ENCODE measurements at regions of chr16 and their contacts with region 1.

Region 1: GRCh38 chr16:70395345-70395901 is 43.5 kb downstream of the ST3GAL2 start:
- DNase-seq: peak; percentile 74 to 86 (median 83)
- ATAC-seq: peak; percentile 93
- H3K4me3 ChIP-seq: no peak overlapping the region
- H3K27ac ChIP-seq: peak overlapping the region; percentile 47; the same call in 1 of the 3 replicates
- H3K4me1 ChIP-seq: peaks cover 21 to 42% of the 10 kb centered on the region in 2 experiments
- H3K27me3 ChIP-seq: no peaks in the 10 kb centered on the region
- CTCF ChIP-seq: peak; percentile 84 to 91 (median 85)
- EP300 ChIP-seq: no peak
- POLR2A ChIP-seq: 0 out of 2 replicates have a peak, but pooled peaks have one; percentile 34
- RAD21 ChIP-seq: peak; percentile 72 to 91

Region 2: GRCh38 chr16:70359552-70359951 is 35.9 kb before region 1 on chr16:
- CTCF ChIA-PET with region 1: no interaction called
- POLR2A ChIA-PET with region 1: no interaction called
- in situ Hi-C with region 1: no loop called
- intact Hi-C with region 1: no loop called
- DNase-seq: no peak
- ATAC-seq: no peak
- H3K4me3 ChIP-seq: no peak overlapping the region
- H3K27ac ChIP-seq: no peak overlapping the region
- H3K4me1 ChIP-seq: no peaks in the 10 kb centered on the region
- H3K27me3 ChIP-seq: no peaks in the 10 kb centered on the region
- CTCF ChIP-seq: no peak
- EP300 ChIP-seq: no peak
- POLR2A ChIP-seq: no peak
- RAD21 ChIP-seq: no peak

Region 3: GRCh38 chr16:70428178-70428998 is 33.0 kb after region 1 on chr16:
- CTCF ChIA-PET with region 1: no interaction called
- POLR2A ChIA-PET with region 1: interaction called, 7 read pairs
- in situ Hi-C with region 1: no loop called
- intact Hi-C with region 1: loop called (anchors 1 kb)
- DNase-seq: peak; percentile 90 to 99 (median 93)
- ATAC-seq: peak; percentile 83
- H3K4me3 ChIP-seq: no peak overlapping the region; the same call in 1 of the 2 replicates
- H3K27ac ChIP-seq: peak overlapping the region; percentile 98
- H3K4me1 ChIP-seq: peaks cover 75 to 78% of the 10 kb centered on the region in 2 experiments
- H3K27me3 ChIP-seq: no peaks in the 10 kb centered on the region
- CTCF ChIP-seq: no peak
- EP300 ChIP-seq: peak; percentile 100
- POLR2A ChIP-seq: peak; percentile 85
- RAD21 ChIP-seq: peak; percentile 41 to 50; a peak in 3 of 4 replicates

Region 4: GRCh38 chr16:70454222-70455034 is 59.0 kb after region 1 on chr16 and contains the start of gene FCSK:
- CTCF ChIA-PET with region 1: interaction called, 10 read pairs
- POLR2A ChIA-PET with region 1: interaction called, 3 read pairs
- in situ Hi-C with region 1: no loop called
- intact Hi-C with region 1: loop called (anchors 2 kb)
- DNase-seq: peak; percentile 80 to 84 (median 83)
- ATAC-seq: peak; percentile 93
- H3K4me3 ChIP-seq: peak within 1 kb of the TSS; percentile 95
- H3K27ac ChIP-seq: peak within 1 kb of the TSS; percentile 97
- H3K4me1 ChIP-seq: peaks cover 10 to 23% of the 10 kb centered on the region in 2 experiments; a peak in 4 of 5 replicates
- H3K27me3 ChIP-seq: no peaks in the 10 kb centered on the region
- CTCF ChIP-seq: peak in 1 of 3 experiments; percentile 29; a peak in 1 of 6 replicates
- EP300 ChIP-seq: no peak; the same call in 1 of the 2 replicates
- POLR2A ChIP-seq: peak; percentile 28; the same call in 1 of the 2 replicates
- RAD21 ChIP-seq: peak in 1 of 2 experiments; percentile 19; a peak in 1 of 4 replicates
- polyA plus RNA-seq, gene FCSK: 0.92 to 1.1 TPM

Region 5: GRCh38 chr16:70460737-70461261 is 65.4 kb after region 1 on chr16:
- CTCF ChIA-PET with region 1: interaction called, 10 read pairs
- POLR2A ChIA-PET with region 1: interaction called, 3 read pairs
- in situ Hi-C with region 1: loop called (anchors 10 kb)
- intact Hi-C with region 1: loop called (anchors 2 kb)
- DNase-seq: no peak
- ATAC-seq: no peak; the same call in 2 of the 3 replicates
- H3K4me3 ChIP-seq: no peak overlapping the region
- H3K27ac ChIP-seq: no peak overlapping the region
- H3K4me1 ChIP-seq: peaks cover 5 to 16% of the 10 kb centered on the region in 2 experiments; a peak in 4 of 5 replicates
- H3K27me3 ChIP-seq: no peaks in the 10 kb centered on the region
- CTCF ChIP-seq: no peak
- EP300 ChIP-seq: no peak
- POLR2A ChIP-seq: no peak
- RAD21 ChIP-seq: no peak

Region 6: DNA sequence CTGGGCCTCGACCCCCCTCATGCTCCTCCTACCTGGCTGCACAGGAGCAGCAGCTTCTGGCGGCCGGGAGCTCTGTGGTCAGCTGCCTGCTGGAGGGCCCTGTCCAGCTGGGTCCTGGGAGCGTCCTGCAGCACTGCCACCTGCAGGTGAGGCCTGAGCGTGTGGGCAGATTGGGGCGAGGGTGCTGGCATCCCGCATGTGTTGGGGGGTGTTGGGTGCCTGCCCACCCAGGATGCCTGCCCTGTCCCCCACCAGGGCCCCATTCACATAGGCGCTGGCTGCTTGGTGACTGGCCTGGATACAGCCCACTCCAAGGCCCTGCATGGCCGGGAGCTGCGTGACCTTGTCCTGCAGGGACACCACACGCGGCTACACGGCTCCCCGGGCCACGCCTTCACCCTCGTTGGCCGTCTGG is 75.5 kb after region 1 on chr16:
- CTCF ChIA-PET with region 1: interaction called, 15 read pairs
- POLR2A ChIA-PET with region 1: interaction called, 3 read pairs
- in situ Hi-C with region 1: loop called (anchors 10 kb)
- intact Hi-C with region 1: loop called (anchors 1 kb)
- DNase-seq: peak; percentile 43 to 58 (median 52)
- ATAC-seq: peak; percentile 79
- H3K4me3 ChIP-seq: no peak overlapping the region
- H3K27ac ChIP-seq: no peak overlapping the region
- H3K4me1 ChIP-seq: peaks cover 0 to 50% of the 10 kb centered on the region in 2 experiments; a peak in 3 of 5 replicates
- H3K27me3 ChIP-seq: no peaks in the 10 kb centered on the region
- CTCF ChIP-seq: peak; percentile 57 to 61 (median 60)
- EP300 ChIP-seq: no peak
- POLR2A ChIP-seq: no peak
- RAD21 ChIP-seq: peak; percentile 62 to 72

Region 7: GRCh38 chr16:70523076-70523742 is 127.8 kb after region 1 on chr16 and contains the start of gene COG4:
- CTCF ChIA-PET with region 1: no interaction called
- POLR2A ChIA-PET with region 1: interaction called, 7 read pairs
- in situ Hi-C with region 1: no loop called
- intact Hi-C with region 1: loop called (anchors 5 kb)
- DNase-seq: peak; percentile 88 to 93 (median 90)
- ATAC-seq: peak; percentile 75
- H3K4me3 ChIP-seq: peak within 1 kb of the TSS; percentile 75
- H3K27ac ChIP-seq: peak within 1 kb of the TSS; percentile 89
- H3K4me1 ChIP-seq: peaks cover 2 to 18% of the 10 kb centered on the region in 2 experiments; a peak in 4 of 5 replicates
- H3K27me3 ChIP-seq: no peaks in the 10 kb centered on the region
- CTCF ChIP-seq: no peak
- EP300 ChIP-seq: no peak
- POLR2A ChIP-seq: peak; percentile 93
- RAD21 ChIP-seq: no peak
- polyA plus RNA-seq, gene COG4: 13.7 to 37.4 TPM

Region 8: GRCh38 chr16:70765481-70766193 is 370.2 kb after region 1 on chr16:
- CTCF ChIA-PET with region 1: no interaction called
- POLR2A ChIA-PET with region 1: no interaction called
- in situ Hi-C with region 1: no loop called
- intact Hi-C with region 1: no loop called
- DNase-seq: no peak
- ATAC-seq: no peak
- H3K4me3 ChIP-seq: no peak overlapping the region
- H3K27ac ChIP-seq: no peak overlapping the region
- H3K4me1 ChIP-seq: peaks cover 0 to 5% of the 10 kb centered on the region in 2 experiments; a peak in 2 of 5 replicates
- H3K27me3 ChIP-seq: no peaks in the 10 kb centered on the region
- CTCF ChIP-seq: no peak
- EP300 ChIP-seq: no peak
- POLR2A ChIP-seq: no peak
- RAD21 ChIP-seq: no peak